BJ (cell line): ENCODE measurements at regions of chr2 and their contacts with region 1.

Region 1: GRCh38 chr2:214809751-214810564 is 475 bp upstream of the BARD1 start:
- DNase-seq: peak; percentile 90
- H3K4me3 ChIP-seq: peak overlapping the region; percentile 88
- H3K27me3 ChIP-seq: no peaks in the 10 kb centered on the region
- CTCF ChIP-seq: no peak

Region 2: DNA sequence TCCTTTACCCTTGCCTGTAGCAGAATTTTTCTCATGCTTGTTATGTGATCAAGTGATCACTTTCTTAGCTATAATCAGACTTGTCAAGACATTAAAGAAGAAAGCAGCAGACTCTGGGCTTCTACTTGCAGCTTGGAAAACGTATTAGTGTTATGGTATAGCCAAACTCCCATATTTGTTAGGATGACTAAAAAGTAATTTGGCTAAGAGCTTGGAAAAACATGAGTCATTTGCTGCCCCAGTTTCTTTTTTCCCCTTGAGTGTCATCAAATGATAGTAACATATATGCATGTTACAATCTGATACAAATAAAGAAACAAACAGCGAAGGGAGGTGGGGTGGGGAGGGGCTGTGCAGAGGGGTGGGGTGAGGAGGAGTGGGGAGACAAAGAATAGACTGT is 1814.0 kb before region 1 on chr2:
- CTCF ChIA-PET with region 1: no interaction called
- POLR2A ChIA-PET with region 1: interaction called, 16 read pairs
- DNase-seq: no peak
- H3K4me3 ChIP-seq: no peak overlapping the region
- H3K27me3 ChIP-seq: no peaks in the 10 kb centered on the region
- CTCF ChIP-seq: no peak

Region 3: GRCh38 chr2:213286186-213286585 is 1523.8 kb before region 1 on chr2:
- CTCF ChIA-PET with region 1: no interaction called
- POLR2A ChIA-PET with region 1: interaction called, 10 read pairs
- DNase-seq: no peak
- H3K4me3 ChIP-seq: no peak overlapping the region
- H3K27me3 ChIP-seq: no peaks in the 10 kb centered on the region
- CTCF ChIP-seq: no peak